ENCODE measurements at regions of chr6 and their contacts with region 1.

Region 1: GRCh38 chr6:159134701-159135364 is 34.4 kb upstream of the FNDC1 start:
- DNase-seq: peak; percentile 30
- H3K4me3 ChIP-seq: no peak overlapping the region
- H3K27ac ChIP-seq: no peak overlapping the region
- H3K4me1 ChIP-seq: no peaks in the 10 kb centered on the region
- H3K27me3 ChIP-seq: peaks cover 33% of the 10 kb centered on the region
- CTCF ChIP-seq: peak; percentile 93

Region 2: GRCh38 chr6:158999666-159000403 is 135.0 kb before region 1 on chr6 and contains the start of gene RSPH3:
- intact Hi-C with region 1: loop called (anchors 10 kb)
- DNase-seq: peak; percentile 93
- H3K4me3 ChIP-seq: peak within 1 kb of the TSS; percentile 88
- H3K27ac ChIP-seq: peak within 1 kb of the TSS; percentile 91
- H3K4me1 ChIP-seq: peaks cover 30% of the 10 kb centered on the region
- H3K27me3 ChIP-seq: no peaks in the 10 kb centered on the region
- CTCF ChIP-seq: peak; percentile 33
- total RNA-seq, gene RSPH3: 11.9 TPM

Region 3: DNA sequence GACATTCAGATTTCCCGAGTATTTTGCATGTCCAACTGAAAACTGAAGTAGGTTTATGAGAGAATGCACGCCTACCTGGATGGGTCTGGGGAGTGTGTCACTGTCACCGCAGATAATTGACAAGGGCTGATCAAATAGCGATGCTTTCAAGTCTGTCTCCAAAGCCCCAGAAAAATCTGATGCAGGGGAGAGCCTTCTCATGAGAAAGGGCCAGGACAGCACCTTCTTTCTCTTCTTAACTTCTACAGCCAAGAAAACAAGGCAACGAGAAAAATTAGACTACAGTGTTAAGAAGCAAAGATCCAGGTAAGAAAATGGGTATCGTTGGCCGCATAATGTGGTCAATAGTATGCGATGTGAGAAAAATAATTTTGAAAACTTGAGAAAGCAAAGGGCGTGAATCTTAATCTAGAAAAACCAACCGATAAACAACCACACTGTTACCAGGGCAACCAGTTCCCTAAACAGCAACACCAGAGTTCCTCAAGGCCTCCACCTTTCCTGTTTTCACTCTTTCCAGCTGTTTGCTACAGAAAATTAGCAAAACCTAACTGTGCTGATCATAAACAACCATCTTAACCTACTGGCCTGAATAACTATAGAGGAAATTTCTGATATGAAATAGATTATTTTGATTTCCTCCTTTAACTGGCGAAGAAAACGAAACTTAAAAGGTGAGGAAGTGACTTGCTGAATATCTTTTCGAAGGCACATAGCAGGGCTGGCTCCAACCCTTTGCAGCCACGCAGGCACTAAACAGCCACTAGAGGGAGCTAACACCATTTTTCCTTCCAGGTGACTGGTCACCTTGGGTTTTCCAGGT is 92.6 kb before region 1 on chr6:
- intact Hi-C with region 1: loop called (anchors 10 kb)
- DNase-seq: no peak
- H3K4me3 ChIP-seq: peak overlapping the region; percentile 42
- H3K27ac ChIP-seq: peak overlapping the region; percentile 41
- H3K4me1 ChIP-seq: peaks cover 16% of the 10 kb centered on the region
- H3K27me3 ChIP-seq: no peaks in the 10 kb centered on the region
- CTCF ChIP-seq: peak; percentile 96

Region 4: DNA sequence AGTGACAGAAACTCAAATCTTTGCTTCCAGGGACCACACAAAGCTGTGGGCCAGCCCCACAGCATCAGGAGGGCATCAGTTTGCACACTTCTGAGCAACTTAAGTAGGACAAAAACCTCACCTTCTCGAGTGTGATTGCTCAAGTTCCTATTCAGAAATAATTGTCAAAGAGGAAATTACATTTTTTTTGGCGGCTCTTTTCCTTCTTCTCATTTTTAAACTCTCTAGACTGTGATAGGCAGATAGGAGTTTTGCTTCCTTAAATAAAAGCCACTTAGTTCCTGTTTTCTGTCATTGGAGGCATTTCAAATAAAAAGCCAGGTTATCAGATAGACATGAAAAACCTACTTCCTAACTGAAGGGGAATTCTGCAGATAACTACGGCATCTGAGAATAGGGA is 78.8 kb before region 1 on chr6:
- intact Hi-C with region 1: no loop called
- DNase-seq: no peak
- H3K4me3 ChIP-seq: no peak overlapping the region
- H3K27ac ChIP-seq: no peak overlapping the region
- H3K4me1 ChIP-seq: no peaks in the 10 kb centered on the region
- H3K27me3 ChIP-seq: peaks cover 60% of the 10 kb centered on the region
- CTCF ChIP-seq: no peak